ENCODE measurements at regions of chr10 and their contacts with region 1.

Region 1: DNA sequence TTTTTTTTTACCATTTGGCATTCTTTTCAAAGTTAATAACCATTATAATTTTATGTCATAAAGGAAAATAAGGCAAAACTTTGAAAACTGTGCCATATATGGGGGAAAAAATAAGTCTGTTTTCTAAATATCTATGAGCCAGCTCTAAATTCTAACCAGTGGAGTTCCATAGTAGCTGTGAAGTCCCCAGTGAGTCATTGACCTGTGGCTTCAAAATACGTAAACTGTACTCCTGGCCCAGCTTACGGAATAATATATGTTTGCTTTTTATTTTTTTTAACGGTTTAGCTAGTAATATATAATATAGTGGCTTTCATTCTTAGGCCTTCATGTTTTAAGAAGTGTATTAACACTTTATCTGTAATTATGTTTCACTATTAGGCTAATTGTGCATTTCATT is 20.5 kb downstream of the ZRANB1 start:
- DNase-seq: no peak
- ATAC-seq: no peak
- H3K4me3 ChIP-seq: no peak overlapping the region
- H3K27ac ChIP-seq: no peak overlapping the region
- H3K4me1 ChIP-seq: 0 out of 3 replicates have a peak, but pooled peaks cover 3% of the 10 kb centered on the region
- CTCF ChIP-seq: no peak
- EP300 ChIP-seq: no peak
- POLR2A ChIP-seq: no peak
- RAD21 ChIP-seq: no peak

Region 2: DNA sequence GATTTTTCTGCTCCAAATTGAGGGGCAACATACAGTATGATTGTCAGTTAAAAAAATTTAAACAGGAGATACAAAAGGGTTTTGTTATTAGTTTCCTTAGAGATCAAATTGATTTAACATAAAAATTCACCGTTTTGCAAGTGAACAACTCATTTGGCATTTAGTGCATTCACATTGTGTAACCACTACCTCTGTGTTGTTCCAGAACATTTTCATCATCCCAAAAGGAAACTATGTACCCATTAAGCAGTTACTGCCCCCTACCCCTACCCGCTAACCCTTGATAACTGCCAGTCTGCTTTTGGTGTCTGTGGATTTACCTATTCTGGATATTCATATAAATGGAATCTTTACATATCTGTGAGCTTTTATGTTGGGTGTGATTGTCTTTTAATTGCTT is 17.4 kb before region 1 on chr10:
- CTCF ChIA-PET with region 1: no interaction called
- POLR2A ChIA-PET with region 1: interaction called, 10 read pairs
- DNase-seq: no peak
- ATAC-seq: no peak
- H3K4me3 ChIP-seq: no peak overlapping the region
- H3K27ac ChIP-seq: no peak overlapping the region; a peak in 1 of 6 replicates
- H3K4me1 ChIP-seq: peaks cover 22% of the 10 kb centered on the region
- CTCF ChIP-seq: no peak
- EP300 ChIP-seq: no peak
- POLR2A ChIP-seq: no peak
- RAD21 ChIP-seq: no peak

Region 3: GRCh38 chr10:125000366-125001312 is 38.2 kb after region 1 on chr10:
- CTCF ChIA-PET with region 1: no interaction called
- POLR2A ChIA-PET with region 1: no interaction called
- DNase-seq: no peak
- ATAC-seq: no peak
- H3K4me3 ChIP-seq: no peak overlapping the region
- H3K27ac ChIP-seq: no peak overlapping the region
- H3K4me1 ChIP-seq: no peaks in the 10 kb centered on the region
- CTCF ChIP-seq: no peak
- EP300 ChIP-seq: no peak
- POLR2A ChIP-seq: no peak
- RAD21 ChIP-seq: no peak

Measured in A549 (cell line).